ENCODE measurements at regions of chr22 and their contacts with region 1.

Region 1: DNA sequence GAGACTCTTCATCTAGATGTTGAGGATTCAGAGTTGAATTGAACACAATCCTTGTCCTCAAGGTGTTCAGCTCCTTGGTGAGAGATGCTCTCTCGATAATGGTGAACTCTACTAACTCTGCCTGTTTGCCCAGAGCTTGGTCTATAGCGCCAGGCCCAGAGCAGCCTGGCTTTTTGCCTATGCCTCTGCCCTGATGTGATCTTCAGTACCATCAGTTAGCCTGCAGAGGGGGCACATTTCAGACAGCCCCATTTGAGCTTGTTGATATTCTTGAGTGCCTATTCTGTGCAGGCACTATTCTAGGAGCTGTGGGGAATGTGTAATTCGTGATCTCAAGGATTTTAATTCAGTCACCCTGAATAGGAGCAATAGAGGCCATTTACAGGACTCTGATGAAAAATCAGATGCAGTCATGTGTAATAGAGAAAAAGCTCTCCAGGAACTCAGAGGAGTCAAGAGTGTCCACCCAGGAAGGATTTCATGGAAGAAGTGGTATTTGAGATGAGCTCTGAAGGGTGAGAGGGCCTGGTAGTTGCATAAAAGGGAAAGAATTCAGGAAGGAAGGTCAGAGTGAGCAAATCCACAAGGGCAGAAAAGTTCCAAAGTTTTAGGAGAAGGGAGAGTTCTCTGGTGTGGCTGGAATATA is 19.3 kb downstream of the GTPBP1 start:
- DNase-seq: no peak
- H3K4me3 ChIP-seq: no peak overlapping the region
- H3K27ac ChIP-seq: no peak overlapping the region
- H3K27me3 ChIP-seq: no peaks in the 10 kb centered on the region
- CTCF ChIP-seq: peak; percentile 57

Region 2: DNA sequence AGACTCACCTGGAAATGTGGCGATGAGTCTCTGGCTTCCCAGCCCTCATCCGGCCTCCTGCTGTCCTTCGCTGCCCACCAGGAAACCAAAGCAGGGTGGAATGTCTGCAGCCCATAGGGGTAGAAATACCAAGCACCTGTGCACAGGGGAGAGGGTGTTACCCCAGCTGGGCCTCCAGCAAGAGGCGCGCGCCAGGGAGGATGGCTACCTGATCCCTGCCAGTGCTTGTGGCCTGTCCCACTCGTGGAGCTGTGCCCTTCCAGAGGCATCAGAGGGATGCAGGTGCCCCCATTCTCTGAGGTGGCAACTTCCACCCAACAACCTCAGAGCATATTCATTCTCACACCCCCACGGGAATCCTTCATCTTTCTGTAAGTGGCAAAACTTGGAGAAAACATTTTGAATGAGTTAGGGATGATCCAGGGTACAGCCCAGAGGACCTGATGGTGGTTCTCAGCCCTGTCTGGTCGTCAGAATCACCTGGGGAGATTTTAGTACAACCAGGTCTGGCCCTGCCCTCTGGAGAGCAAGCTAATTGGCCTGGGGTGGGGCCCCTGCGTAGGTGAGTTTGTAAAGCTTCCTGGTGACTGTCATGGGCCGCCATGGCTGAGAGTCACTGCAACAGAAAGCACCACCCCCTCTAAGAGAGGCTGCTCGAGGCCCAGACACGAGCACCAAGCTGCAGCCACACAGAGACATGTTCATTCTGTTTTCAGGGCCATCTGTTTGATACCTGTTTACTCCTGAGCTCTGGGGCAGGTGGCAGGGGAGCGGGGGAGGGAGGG is 20.8 kb after region 1 on chr22:
- CTCF ChIA-PET with region 1: interaction called, 16 read pairs
- POLR2A ChIA-PET with region 1: no interaction called
- DNase-seq: no peak
- H3K4me3 ChIP-seq: no peak overlapping the region
- H3K27ac ChIP-seq: no peak overlapping the region
- H3K27me3 ChIP-seq: no peaks in the 10 kb centered on the region
- CTCF ChIP-seq: no peak

Region 3: DNA sequence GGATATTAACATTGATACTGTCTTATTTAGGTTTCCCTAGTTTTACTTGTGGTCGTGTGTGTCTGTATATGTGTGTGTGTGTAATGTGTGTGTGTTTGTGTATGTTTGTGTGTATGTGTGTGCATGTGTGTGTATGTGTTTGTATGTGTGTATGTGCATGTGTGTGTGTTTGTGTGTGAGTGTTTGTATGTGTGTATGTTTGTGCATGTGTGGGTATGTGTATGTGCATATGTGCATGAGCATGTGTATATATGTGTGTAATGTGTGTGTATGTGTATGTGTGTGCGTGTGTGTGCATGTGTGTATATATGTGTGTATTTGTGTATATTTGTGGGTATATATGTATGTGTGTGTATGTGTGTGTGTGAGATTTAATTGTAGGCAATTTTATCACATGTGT is 86.2 kb after region 1 on chr22:
- CTCF ChIA-PET with region 1: no interaction called
- POLR2A ChIA-PET with region 1: no interaction called
- DNase-seq: no peak
- H3K4me3 ChIP-seq: no peak overlapping the region
- H3K27ac ChIP-seq: no peak overlapping the region
- H3K27me3 ChIP-seq: peaks cover 37% of the 10 kb centered on the region
- CTCF ChIP-seq: no peak

Region 4: DNA sequence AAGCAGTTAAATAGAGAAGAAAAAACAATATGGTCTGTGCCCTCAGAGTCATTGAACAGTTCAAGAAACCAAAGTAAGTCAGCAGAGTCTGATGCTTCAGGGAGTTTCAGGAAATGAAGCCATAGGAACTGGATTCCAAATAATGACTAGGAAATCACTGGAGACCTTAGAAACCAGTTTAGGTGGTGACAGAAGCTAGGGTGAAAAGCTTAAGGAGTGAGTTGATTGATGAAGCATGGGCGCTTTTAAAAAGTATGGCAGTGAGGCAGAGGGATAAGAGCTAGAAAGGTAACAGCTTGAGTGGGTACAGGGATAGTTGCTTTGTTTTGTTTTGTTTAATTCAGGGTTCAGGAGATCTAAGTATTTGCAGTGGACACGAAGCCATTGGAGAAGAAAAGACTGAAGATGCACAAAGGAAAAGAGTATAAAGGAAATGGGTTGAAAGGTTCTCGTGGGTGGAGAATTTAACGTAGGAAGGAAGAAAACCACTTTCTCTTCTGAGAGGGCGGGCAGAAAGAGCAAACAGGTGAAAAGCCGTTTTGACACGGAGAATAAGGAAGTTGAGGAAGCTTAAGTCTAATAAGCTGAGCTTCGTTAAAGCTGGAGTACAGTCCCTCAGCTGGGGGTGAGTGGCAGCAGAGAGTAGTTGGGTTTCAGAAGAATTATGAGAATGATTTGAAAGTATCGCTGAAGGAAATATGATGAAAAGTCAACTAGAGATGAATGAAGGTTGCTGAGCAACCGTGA is 1660.2 kb after region 1 on chr22:
- CTCF ChIA-PET with region 1: no interaction called
- POLR2A ChIA-PET with region 1: no interaction called
- DNase-seq: no peak
- H3K4me3 ChIP-seq: no peak overlapping the region
- H3K27ac ChIP-seq: no peak overlapping the region
- H3K27me3 ChIP-seq: no peaks in the 10 kb centered on the region
- CTCF ChIP-seq: no peak

Measured in AG04450 (cell line).